ENCODE measurements at regions of chr17 and their contacts with region 1.

Region 1: DNA sequence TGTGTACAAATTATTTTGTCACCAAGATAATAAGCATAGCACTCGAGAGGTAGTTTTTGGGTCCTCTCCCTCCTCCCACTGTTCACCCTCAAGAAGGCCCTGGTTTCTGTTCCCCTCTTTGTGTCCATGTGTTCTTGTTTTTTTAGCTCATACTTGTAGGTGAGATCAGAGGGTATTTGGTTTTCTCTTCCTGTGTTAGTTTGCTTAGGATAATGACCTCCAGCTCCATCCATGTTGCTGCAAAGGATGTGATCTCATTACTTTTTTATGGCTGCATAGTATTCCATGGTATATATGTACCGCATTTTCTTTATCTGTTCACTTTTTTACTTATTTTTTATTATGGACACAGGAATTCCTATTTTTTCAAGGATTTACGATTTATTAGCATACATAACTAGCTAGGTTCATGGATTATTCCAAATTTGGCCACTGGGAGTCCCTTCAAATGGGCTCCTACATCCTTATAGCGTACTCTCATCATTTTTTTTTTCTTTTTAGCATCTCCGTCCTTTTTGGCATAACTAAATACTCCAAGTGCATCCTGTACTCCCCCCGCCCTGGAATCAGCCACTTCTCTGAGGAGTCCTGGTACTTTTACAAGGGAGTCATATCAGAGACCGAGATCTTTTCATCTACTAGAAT is 7.3 kb downstream of the TADA2A start:
- DNase-seq: peak; percentile 24
- H3K4me3 ChIP-seq: no peak overlapping the region
- H3K27ac ChIP-seq: no peak overlapping the region
- H3K4me1 ChIP-seq: no peaks in the 10 kb centered on the region
- H3K27me3 ChIP-seq: no peaks in the 10 kb centered on the region

Region 2: DNA sequence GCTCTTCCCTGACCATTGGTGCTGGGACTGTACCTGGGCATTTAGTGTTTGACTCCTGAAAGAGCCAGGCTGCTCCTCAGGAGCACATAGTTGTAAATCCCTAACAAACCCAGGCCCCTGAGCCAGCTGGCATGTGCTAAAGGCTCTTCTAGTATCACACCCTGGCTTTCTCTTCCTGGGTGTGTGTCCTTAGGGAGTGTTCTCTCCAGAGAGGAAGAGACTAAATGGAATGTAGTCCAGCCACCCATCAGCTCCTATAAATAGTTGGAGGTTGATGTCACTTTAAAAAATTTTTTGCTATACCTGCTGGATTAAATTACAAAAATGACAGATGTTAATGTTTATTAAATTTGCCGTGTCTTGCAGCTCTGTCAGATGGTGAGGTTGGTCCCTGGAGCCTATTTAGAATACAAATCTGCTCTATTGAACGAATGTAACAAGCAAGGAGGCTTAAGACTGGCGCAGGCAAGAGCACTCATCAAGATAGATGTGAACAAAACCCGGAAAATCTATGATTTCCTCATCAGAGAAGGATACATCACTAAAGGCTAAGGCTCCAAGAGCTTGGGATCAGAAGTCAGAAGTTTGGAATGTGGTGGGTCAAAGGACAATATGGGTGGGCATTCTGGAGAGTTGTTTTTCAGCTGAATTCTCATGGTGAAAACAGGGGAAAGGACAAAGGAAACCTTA is 62.6 kb after region 1 on chr17:
- in situ Hi-C with region 1: loop called (anchors 10 kb)
- DNase-seq: peak; percentile 70
- H3K4me3 ChIP-seq: 0 out of 2 replicates have a peak overlapping the region, but pooled peaks have one; percentile 14
- H3K27ac ChIP-seq: peak overlapping the region; percentile 88
- H3K4me1 ChIP-seq: peaks cover 39% of the 10 kb centered on the region
- H3K27me3 ChIP-seq: no peaks in the 10 kb centered on the region

Region 3: DNA sequence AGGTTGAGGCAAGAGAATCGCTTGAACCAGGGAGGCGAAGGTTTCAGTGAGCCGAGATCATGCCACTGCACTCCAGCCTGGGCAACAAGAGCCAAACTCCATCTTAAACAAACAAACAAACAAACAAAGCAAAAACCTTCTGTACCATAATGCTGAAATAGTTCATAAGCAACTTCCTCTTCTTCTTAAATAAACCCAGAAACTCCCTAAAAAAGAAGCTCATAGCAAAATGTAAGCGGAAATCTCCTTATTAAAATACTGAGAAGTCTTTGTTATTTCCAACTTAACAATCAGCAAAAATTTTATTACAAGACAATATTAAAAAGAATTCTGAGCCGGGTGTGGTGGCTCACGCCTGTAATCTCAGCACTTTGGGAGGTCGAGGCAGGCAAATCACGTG is 1904.6 kb after region 1 on chr17:
- in situ Hi-C with region 1: no loop called
- DNase-seq: no peak
- H3K4me3 ChIP-seq: no peak overlapping the region
- H3K27ac ChIP-seq: no peak overlapping the region
- H3K4me1 ChIP-seq: peaks cover 10% of the 10 kb centered on the region; the same call in 1 of the 2 replicates
- H3K27me3 ChIP-seq: no peaks in the 10 kb centered on the region

Measured in GM23248 (cell line).